Calu3 (cell line): ENCODE measurements at regions of chr15 and their contacts with region 1.

Region 1: DNA sequence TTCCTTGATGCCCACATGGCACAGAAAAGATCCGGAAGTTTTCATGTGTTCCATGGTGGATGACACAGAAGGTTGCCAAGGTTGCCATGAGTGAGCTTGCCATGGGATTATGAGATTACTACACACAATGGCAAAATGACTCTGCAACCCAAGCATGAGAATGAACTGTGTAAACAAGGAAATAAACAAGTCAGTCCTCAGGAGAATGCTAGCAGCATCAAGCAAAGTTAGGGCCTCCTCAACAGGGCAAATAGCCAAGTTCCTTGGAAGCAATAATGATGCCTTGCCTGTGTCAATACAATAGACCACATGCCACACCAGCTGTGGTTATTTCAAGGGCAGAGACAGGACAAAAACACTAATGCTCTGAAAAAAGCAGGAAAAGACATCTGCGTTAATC is 41.8 kb downstream of the AQR start:
- DNase-seq: no peak
- H3K4me3 Mint-ChIP-seq: no peak overlapping the region
- H3K27ac Mint-ChIP-seq: no peak overlapping the region
- H3K4me1 Mint-ChIP-seq: no peaks in the 10 kb centered on the region
- H3K27me3 Mint-ChIP-seq: no peaks in the 10 kb centered on the region
- CTCF ChIP-seq: no peak

Region 2: GRCh38 chr15:34616613-34617012 is 311.1 kb before region 1 on chr15:
- CTCF ChIA-PET with region 1: no interaction called
- intact Hi-C with region 1: loop called (anchors 5 kb)
- DNase-seq: peak; percentile 5
- H3K4me3 Mint-ChIP-seq: no peak overlapping the region
- H3K27ac Mint-ChIP-seq: no peak overlapping the region
- H3K4me1 Mint-ChIP-seq: no peaks in the 10 kb centered on the region
- H3K27me3 Mint-ChIP-seq: no peaks in the 10 kb centered on the region
- CTCF ChIP-seq: no peak